CD4-positive, alpha-beta memory T cell (primary cell): ENCODE measurements at regions of chr16 and their contacts with region 1.

Region 1: DNA sequence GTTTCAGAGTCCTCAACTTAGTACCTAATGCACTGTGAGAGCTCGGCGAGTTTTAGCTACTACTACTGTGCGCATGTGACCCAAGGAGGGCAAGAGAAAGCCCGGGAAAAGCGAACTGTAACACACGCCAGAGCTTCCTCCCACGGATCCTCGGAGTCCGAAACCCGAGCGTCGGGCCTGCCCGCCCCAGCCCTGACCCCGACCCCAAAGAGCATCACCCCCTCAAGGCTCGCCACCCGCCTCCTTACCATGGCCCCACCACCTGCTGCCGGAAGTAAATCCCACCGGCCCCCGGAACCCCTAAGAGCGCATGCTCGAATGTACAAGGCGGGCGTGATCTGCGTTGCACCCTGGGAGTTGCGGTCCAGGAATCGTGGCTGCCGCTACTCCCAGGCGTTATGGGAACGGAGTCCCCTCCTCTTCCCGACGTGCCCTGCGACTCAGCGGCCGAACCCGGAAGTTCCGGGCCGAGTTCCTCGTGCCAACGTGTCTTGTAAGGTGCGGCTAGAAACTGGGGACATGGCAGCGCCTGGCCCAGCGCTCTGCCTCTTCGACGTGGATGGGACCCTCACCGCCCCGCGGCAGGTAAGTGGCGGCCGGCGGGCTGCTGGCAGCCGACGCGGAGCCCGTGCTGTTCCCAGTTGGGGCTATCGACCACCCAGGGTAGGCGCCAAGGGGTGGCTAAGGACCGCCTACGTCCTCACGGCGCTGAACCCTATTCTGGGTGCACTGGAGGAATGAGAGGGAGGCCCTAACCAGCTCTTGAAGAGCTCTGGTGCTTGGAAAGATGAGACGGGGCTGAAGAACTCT is at the starts of genes PMM2 and TMEM186:
- DNase-seq: peak; percentile 93 to 97 (median 94)
- H3K4me3 ChIP-seq: peak within 1 kb of the TSS; percentile 73 to 97
- H3K4me3 Mint-ChIP-seq: peak within 1 kb of the TSS; percentile 93 to 98 (median 95)
- H3K27ac ChIP-seq: peak within 1 kb of the TSS; percentile 81
- H3K27ac Mint-ChIP-seq: peak within 1 kb of the TSS; percentile 88 to 97 (median 94)
- H3K4me1 ChIP-seq: peaks cover 44% of the 10 kb centered on the region
- H3K4me1 Mint-ChIP-seq: peaks cover 24 to 55% (median 33%) of the 10 kb centered on the region in 4 donors
- H3K27me3 ChIP-seq: no peaks in the 10 kb centered on the region
- H3K27me3 Mint-ChIP-seq: no peaks in the 10 kb centered on the region
- total RNA-seq, gene PMM2: 51.7 to 61.7 TPM
- total RNA-seq, gene TMEM186: 15.6 to 17.9 TPM

Region 2: DNA sequence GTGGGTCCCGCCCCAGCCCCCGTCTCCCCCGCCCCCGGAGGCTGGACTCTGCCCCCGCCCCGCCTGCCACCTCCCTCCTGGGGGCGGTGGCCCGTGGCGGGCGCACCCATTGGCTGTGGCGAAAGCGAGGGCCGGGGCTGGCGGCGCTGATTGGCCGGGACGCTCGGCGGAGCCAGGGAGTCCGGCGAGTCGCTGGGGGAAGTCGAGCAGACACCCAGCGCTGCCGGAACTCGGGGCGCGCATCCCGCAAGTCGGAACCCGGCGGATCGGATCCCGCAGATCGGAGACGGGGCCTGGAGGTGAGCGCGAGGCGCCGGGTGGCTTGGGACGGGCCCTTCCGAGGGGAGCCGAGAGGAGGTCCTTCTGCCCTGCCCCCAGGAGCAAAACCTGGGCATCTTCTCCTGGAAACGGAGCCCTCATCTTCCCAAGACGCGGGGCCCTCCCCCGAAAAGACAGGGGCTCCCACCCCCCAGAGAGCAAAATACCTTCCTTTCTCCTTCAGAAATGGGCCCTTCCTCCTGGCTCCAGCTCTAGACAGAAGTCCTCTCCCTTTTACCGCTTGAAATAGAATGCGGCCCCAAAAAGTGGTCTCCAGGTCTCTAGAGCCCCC is 123.1 kb before region 1 on chr16 and contains the start of gene ABAT:
- CTCF ChIA-PET with region 1: no interaction called
- POLR2A ChIA-PET with region 1: interaction called, 4 read pairs
- intact Hi-C with region 1: loop called (anchors 1 kb)
- DNase-seq: peak; percentile 85 to 92 (median 88)
- H3K4me3 ChIP-seq: peak within 1 kb of the TSS; percentile 85 to 87
- H3K4me3 Mint-ChIP-seq: peak within 1 kb of the TSS; percentile 87 to 95 (median 91)
- H3K27ac ChIP-seq: peak within 1 kb of the TSS; percentile 62
- H3K27ac Mint-ChIP-seq: peak within 1 kb of the TSS; percentile 87 to 98 (median 92)
- H3K4me1 ChIP-seq: peaks cover 17% of the 10 kb centered on the region
- H3K4me1 Mint-ChIP-seq: peaks cover 8 to 24% (median 16%) of the 10 kb centered on the region in 4 donors
- H3K27me3 ChIP-seq: no peaks in the 10 kb centered on the region
- H3K27me3 Mint-ChIP-seq: no peaks in the 10 kb centered on the region
- total RNA-seq, gene ABAT: 10.0 to 10.8 TPM

Region 3: GRCh38 chr16:8822403-8822802 is 24.8 kb after region 1 on chr16:
- CTCF ChIA-PET with region 1: no interaction called
- POLR2A ChIA-PET with region 1: no interaction called
- intact Hi-C with region 1: no loop called
- DNase-seq: no peak
- H3K4me3 ChIP-seq: no peak overlapping the region
- H3K4me3 Mint-ChIP-seq: no peak overlapping the region
- H3K27ac ChIP-seq: no peak overlapping the region
- H3K27ac Mint-ChIP-seq: peak overlapping the region in 2 of 7 donors; percentile 64 to 74
- H3K4me1 ChIP-seq: peaks cover 3% of the 10 kb centered on the region
- H3K4me1 Mint-ChIP-seq: peaks cover 1 to 16% (median 9%) of the 10 kb centered on the region in 4 donors
- H3K27me3 ChIP-seq: no peaks in the 10 kb centered on the region
- H3K27me3 Mint-ChIP-seq: no peaks in the 10 kb centered on the region